Heart left ventricle (tissue), 16 donors: ENCODE measurements at regions of chr3 and their contacts with region 1.

Region 1: GRCh38 chr3:190701096-190701532 is 161.4 kb downstream of the GMNC start:
- DNase-seq: peak in 3 of 5 donors; percentile 10 to 55 (median 43)
- ATAC-seq: peak; percentile 72 to 84 (median 80)
- H3K4me3 ChIP-seq: no peak overlapping the region
- H3K27ac ChIP-seq: no peak overlapping the region
- H3K4me1 ChIP-seq: peaks cover 0 to 7% (median 0%) of the 10 kb centered on the region in 12 donors
- H3K27me3 ChIP-seq: no peaks in the 10 kb centered on the region
- CTCF ChIP-seq: peak; percentile 27 to 60 (median 46)
- POLR2A ChIP-seq: no peak

Region 2: GRCh38 chr3:189961525-189962161 is 739.5 kb before region 1 on chr3:
- intact Hi-C with region 1: loop called in 4 of 10 experiments (anchors 5 to 10 kb)
- DNase-seq: peak; percentile 66 to 73 (median 71)
- ATAC-seq: peak; percentile 42 to 78 (median 73)
- H3K4me3 ChIP-seq: no peak overlapping the region
- H3K27ac ChIP-seq: peak overlapping the region in 5 of 12 donors; percentile 8 to 33 (median 8)
- H3K4me1 ChIP-seq: peaks cover 0 to 6% (median 0%) of the 10 kb centered on the region in 12 donors
- H3K27me3 ChIP-seq: no peaks in the 10 kb centered on the region
- CTCF ChIP-seq: peak; percentile 83 to 96 (median 91)
- POLR2A ChIP-seq: no peak

Region 3: DNA sequence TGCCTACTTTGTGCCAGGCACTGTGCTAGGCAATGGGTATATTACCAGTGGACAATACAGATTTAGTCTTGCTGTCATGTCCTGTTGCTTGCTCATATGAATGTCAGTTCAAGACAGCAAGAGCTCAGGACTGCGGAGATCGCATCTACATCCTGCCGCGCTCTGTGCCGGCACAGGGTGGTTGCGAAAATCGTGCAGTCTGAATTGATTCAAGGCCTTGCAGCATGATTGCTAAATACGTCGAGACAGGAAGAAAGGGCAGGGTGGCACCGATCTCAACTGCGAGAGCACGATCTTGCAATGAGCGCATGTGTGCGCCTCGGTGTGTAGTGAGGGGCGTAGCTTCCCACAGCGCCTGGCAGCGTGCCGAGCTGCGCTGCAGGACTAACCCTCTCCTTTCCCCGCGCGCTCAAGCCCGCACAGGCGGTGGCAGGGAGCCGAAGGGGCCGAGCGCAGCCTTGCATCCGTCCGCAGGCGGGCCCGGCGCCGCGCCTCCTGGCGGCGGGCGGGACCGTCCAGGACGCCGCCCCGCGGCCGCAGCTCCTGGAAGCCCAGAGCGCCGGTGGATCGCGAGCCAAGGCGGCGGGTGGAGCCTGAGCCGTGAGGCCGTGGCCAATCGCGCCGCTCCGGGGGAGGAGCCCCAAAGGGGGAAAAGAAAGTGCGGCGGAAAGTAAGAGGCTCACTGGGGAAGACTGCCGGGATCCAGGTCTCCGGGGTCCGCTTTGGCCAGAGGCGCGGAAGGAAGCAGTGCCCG is 187.5 kb before region 1 on chr3 and contains the start of gene IL1RAP:
- intact Hi-C with region 1: loop called in 5 of 10 experiments (anchors 10 kb)
- DNase-seq: peak; percentile 92 to 96 (median 94)
- ATAC-seq: peak; percentile 95 to 99 (median 98)
- H3K4me3 ChIP-seq: peak within 1 kb of the TSS; percentile 65 to 96 (median 80)
- H3K27ac ChIP-seq: peak within 1 kb of the TSS in 11 of 12 donors; percentile 43 to 95 (median 78)
- H3K4me1 ChIP-seq: peaks cover 0 to 35% (median 8%) of the 10 kb centered on the region in 12 donors
- H3K27me3 ChIP-seq: no peaks in the 10 kb centered on the region
- CTCF ChIP-seq: peak; percentile 53 to 91 (median 84)
- POLR2A ChIP-seq: peak in 1 of 2 donors; percentile 84
- total RNA-seq, gene IL1RAP: 3.9 to 16.4 (median 8.2) TPM

Region 4: GRCh38 chr3:190862209-190863118 is 161.3 kb after region 1 on chr3 and contains the start of gene GMNC:
- intact Hi-C with region 1: loop called in 3 of 10 experiments (anchors 5 to 10 kb)
- DNase-seq: peak; percentile 81 to 93 (median 92)
- ATAC-seq: peak; percentile 94 to 98 (median 97)
- H3K4me3 ChIP-seq: peak within 1 kb of the TSS; percentile 53 to 70 (median 63)
- H3K27ac ChIP-seq: peak within 1 kb of the TSS; percentile 64 to 92 (median 84)
- H3K4me1 ChIP-seq: peaks cover 0 to 10% (median 0%) of the 10 kb centered on the region in 12 donors
- H3K27me3 ChIP-seq: peaks cover 0 to 33% (median 0%) of the 10 kb centered on the region in 9 donors
- CTCF ChIP-seq: no peak
- POLR2A ChIP-seq: peak; percentile 33 to 95
- total RNA-seq, gene GMNC: 0.20 to 4.4 (median 1.7) TPM

Region 5: GRCh38 chr3:191051037-191051436 is 349.9 kb after region 1 on chr3:
- intact Hi-C with region 1: loop called in 9 of 10 experiments (anchors 1 to 5 kb)
- DNase-seq: no peak
- ATAC-seq: no peak
- H3K4me3 ChIP-seq: no peak overlapping the region
- H3K27ac ChIP-seq: no peak overlapping the region
- H3K4me1 ChIP-seq: no peaks in the 10 kb centered on the region
- H3K27me3 ChIP-seq: no peaks in the 10 kb centered on the region
- CTCF ChIP-seq: peak; percentile 21 to 59 (median 50)
- POLR2A ChIP-seq: no peak